B cell (primary cell): ENCODE measurements at regions of chr12 and their contacts with region 1.

Region 1: DNA sequence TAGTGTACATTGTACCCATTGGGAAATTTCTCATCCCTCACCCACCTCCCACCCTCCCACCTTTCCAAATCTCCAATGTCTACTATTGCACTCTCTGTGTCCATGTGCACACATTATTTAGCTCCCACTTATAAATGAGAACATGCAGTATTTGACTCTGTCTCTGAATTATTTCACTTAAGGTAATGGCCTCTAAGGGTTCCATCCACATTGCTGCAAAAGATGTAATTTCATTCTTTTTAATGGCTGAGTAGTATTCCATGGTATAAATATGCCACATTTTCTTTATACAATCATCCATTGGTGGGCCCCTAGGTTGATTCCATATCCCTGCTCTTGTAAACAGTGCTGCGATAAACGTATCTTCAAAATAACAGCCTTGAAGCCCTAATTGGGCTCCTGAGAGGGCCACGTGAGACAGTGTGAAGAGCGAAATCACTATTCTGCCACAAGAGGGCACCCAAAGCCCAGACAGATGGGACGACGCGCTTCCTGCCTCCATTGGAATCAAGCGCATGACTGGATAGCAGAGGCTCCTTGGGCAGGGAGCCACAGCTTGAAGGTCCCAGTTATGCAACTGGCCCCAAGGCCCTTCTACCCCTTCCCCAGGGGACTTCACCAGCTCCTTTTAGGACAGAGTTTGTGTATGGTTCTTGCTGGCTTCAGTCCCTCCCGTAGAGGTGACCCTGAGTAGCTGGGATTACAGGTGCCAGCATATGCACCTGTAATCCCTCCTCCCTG is 21.3 kb upstream of the CD27 start:
- DNase-seq: peak; percentile 91
- ATAC-seq: peak; percentile 34
- H3K4me3 ChIP-seq: peak overlapping the region in 1 of 5 experiments; percentile 18
- H3K4me3 Mint-ChIP-seq: peak overlapping the region; percentile 54
- H3K27ac ChIP-seq: peak overlapping the region; percentile 3 to 35
- H3K27ac Mint-ChIP-seq: peak overlapping the region; percentile 90
- H3K4me1 ChIP-seq: peaks cover 33 to 41% of the 10 kb centered on the region in 2 donors
- H3K4me1 Mint-ChIP-seq: peaks cover 39% of the 10 kb centered on the region
- H3K27me3 ChIP-seq: no peaks in the 10 kb centered on the region
- H3K27me3 Mint-ChIP-seq: peaks cover 13% of the 10 kb centered on the region
- CTCF ChIP-seq: peak; percentile 87

Region 2: GRCh38 chr12:6241495-6241894 is 181.9 kb before region 1 on chr12:
- CTCF ChIA-PET with region 1: no interaction called
- POLR2A ChIA-PET with region 1: no interaction called
- intact Hi-C with region 1: no loop called
- DNase-seq: no peak
- ATAC-seq: no peak
- H3K4me3 ChIP-seq: no peak overlapping the region
- H3K4me3 Mint-ChIP-seq: no peak overlapping the region
- H3K27ac ChIP-seq: no peak overlapping the region
- H3K27ac Mint-ChIP-seq: no peak overlapping the region
- H3K4me1 ChIP-seq: no peaks in the 10 kb centered on the region
- H3K4me1 Mint-ChIP-seq: no peaks in the 10 kb centered on the region
- H3K27me3 ChIP-seq: peaks cover 0 to 2% (median 0%) of the 10 kb centered on the region in 4 experiments
- H3K27me3 Mint-ChIP-seq: peaks cover 3% of the 10 kb centered on the region
- CTCF ChIP-seq: no peak

Region 3: DNA sequence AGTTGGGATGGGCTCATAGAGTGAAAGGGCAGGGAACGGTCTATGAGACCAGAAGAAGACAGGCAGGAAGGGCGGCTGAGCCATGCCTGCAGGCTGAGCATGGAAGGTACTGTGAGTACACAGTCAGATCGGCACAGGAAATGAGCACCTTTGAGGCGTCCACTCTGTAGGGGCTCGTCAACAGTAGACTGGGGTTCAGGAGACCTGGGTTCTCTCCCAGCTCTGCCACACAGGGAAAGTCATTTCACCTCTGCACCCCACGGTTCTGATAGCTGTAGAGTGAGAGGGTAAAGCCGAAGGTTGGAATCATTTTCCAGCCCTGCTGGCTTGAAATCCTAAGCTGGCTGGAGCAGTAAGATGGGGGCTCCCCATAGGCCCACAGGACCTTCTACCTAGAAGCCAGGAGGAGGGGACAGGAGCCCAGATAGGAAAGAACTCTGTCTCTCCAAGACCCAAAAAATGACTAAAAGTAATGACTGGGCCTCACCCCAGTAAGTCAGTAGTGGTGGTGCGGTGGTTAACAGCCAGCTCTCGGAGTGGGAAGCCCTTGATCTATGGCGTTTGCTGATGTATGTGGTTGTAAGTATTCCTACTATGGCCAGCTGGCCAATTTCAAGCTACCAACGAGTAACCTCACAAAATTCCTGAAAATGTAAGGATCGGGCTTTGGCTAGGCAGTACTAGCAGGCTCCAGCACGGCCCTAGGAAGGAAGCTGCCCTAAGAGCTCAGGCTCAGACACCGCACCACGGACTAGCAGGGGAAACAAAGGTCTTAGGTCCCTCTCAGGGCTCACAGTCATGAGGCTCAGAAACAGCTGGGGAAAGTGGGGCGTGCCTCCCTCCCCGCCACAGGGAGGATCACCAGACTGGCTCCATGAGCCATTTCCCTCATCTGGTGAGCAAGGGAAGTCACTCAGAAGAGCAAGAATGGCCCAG is 11.0 kb after region 1 on chr12:
- CTCF ChIA-PET with region 1: interaction called, 14 read pairs
- POLR2A ChIA-PET with region 1: interaction called, 3 read pairs
- intact Hi-C with region 1: no loop called
- DNase-seq: no peak
- ATAC-seq: peak; percentile 19
- H3K4me3 ChIP-seq: peak overlapping the region in 1 of 5 experiments; percentile 25
- H3K4me3 Mint-ChIP-seq: no peak overlapping the region
- H3K27ac ChIP-seq: no peak overlapping the region
- H3K27ac Mint-ChIP-seq: peak overlapping the region; percentile 65
- H3K4me1 ChIP-seq: peaks cover 25 to 42% of the 10 kb centered on the region in 2 donors
- H3K4me1 Mint-ChIP-seq: peaks cover 37% of the 10 kb centered on the region
- H3K27me3 ChIP-seq: no peaks in the 10 kb centered on the region
- H3K27me3 Mint-ChIP-seq: no peaks in the 10 kb centered on the region
- CTCF ChIP-seq: no peak

Region 4: GRCh38 chr12:6451348-6452244 is 28.2 kb after region 1 on chr12 and contains the start of gene TAPBPL:
- CTCF ChIA-PET with region 1: interaction called, 87 read pairs
- POLR2A ChIA-PET with region 1: interaction called, 66 read pairs
- intact Hi-C with region 1: loop called (anchors 1 kb)
- DNase-seq: peak; percentile 91
- ATAC-seq: peak; percentile 81
- H3K4me3 ChIP-seq: peak within 1 kb of the TSS; percentile 86 to 97 (median 94)
- H3K4me3 Mint-ChIP-seq: peak within 1 kb of the TSS; percentile 97
- H3K27ac ChIP-seq: peak within 1 kb of the TSS; percentile 96 to 98
- H3K27ac Mint-ChIP-seq: peak within 1 kb of the TSS; percentile 99
- H3K4me1 ChIP-seq: peaks cover 33 to 55% of the 10 kb centered on the region in 2 donors
- H3K4me1 Mint-ChIP-seq: peaks cover 64% of the 10 kb centered on the region
- H3K27me3 ChIP-seq: no peaks in the 10 kb centered on the region
- H3K27me3 Mint-ChIP-seq: no peaks in the 10 kb centered on the region
- CTCF ChIP-seq: no peak
- total RNA-seq, gene TAPBPL: 71.2 and 80.5 TPM in 2 replicates

Region 5: DNA sequence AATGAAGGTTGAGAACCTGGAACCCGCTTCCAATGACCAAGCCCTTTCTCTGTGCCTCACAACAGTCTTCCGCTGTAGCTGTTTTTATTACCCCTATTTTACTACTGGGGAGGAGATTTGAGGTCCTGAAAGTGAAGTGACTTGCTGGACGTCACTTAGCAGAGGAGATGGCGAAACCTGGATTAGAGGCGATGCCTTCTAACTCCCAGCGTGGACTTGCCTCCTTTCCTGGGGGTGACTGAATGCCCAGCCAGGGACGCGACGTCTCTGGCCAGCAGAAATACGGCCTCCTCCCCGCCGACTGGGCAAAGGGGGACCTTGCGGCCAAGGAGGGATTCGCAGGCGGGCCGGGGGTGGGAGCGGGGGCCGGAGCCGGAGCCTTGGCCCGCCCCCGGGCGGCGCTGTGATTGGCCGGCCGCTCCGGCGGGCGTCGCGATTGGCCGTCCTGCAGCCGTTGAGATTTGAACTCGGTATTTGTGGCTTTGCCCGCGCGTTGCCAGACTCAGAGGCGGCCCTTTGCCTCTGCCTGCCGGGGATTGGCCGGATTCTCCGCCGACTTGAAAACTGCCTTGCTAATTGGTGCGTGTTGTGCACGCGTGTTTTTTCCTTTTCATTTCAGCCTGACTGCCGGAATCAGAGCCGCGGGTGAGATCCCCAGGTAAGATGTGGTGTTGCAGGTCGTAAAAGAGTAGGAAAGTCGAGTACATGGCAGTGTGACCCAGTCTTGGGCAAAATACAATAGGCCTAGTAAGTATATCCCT is 70.2 kb after region 1 on chr12 and contains the start of gene NCAPD2:
- CTCF ChIA-PET with region 1: interaction called, 13 read pairs
- POLR2A ChIA-PET with region 1: interaction called, 14 read pairs
- intact Hi-C with region 1: loop called (anchors 1 kb)
- DNase-seq: peak; percentile 97
- ATAC-seq: peak; percentile 86
- H3K4me3 ChIP-seq: peak within 1 kb of the TSS; percentile 68 to 100 (median 95)
- H3K4me3 Mint-ChIP-seq: peak within 1 kb of the TSS; percentile 98
- H3K27ac ChIP-seq: peak within 1 kb of the TSS; percentile 92 to 95
- H3K27ac Mint-ChIP-seq: peak within 1 kb of the TSS; percentile 95
- H3K4me1 ChIP-seq: peaks cover 22 to 27% of the 10 kb centered on the region in 2 donors
- H3K4me1 Mint-ChIP-seq: peaks cover 31% of the 10 kb centered on the region
- H3K27me3 ChIP-seq: no peaks in the 10 kb centered on the region
- H3K27me3 Mint-ChIP-seq: no peaks in the 10 kb centered on the region
- CTCF ChIP-seq: peak; percentile 22
- total RNA-seq, gene NCAPD2: 41.1 and 42.1 TPM in 2 replicates

Region 6: DNA sequence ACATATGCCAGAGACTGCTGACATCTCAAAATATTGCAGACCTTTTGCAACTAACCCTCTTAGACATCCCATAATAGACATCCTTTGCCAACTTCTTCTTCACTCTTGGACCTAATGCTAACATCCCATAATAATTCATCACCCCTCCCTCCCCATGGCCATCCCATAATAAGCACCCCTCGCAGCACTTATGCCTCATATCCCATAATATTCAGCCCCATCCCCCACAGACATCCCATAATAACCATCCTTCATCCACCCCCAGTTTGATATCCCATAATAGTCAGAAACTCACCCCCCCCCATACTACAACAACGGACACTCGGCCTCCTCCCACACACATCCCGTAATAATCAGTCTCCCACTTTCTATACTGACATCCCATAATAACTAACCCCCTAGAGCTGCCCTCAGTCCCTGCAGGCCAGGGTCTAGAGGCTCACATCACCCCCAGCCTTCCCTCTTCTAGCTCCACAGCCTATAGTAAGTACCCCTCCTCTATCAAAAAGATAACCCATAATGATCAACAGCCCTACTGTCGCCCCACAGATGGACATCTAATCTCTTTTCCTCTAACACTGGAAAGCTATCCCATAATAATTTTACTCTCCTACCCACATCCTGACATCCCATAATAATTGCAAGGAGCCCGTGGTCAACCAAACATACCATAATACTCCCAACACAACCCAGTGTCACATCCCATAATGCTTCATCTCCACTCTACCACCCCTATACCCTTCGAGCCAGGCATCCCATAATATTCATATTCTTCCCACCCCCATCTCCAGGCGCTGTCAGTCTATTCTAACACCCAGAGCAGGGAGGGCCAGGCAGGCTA is 184.5 kb after region 1 on chr12:
- CTCF ChIA-PET with region 1: no interaction called
- POLR2A ChIA-PET with region 1: interaction called, 6 read pairs
- intact Hi-C with region 1: loop called (anchors 1 kb)
- DNase-seq: peak; percentile 90
- ATAC-seq: peak; percentile 20
- H3K4me3 ChIP-seq: no peak overlapping the region
- H3K4me3 Mint-ChIP-seq: no peak overlapping the region
- H3K27ac ChIP-seq: peak overlapping the region; percentile 90 to 95
- H3K27ac Mint-ChIP-seq: no peak overlapping the region
- H3K4me1 ChIP-seq: peaks cover 56 to 63% of the 10 kb centered on the region in 2 donors
- H3K4me1 Mint-ChIP-seq: peaks cover 58% of the 10 kb centered on the region
- H3K27me3 ChIP-seq: no peaks in the 10 kb centered on the region
- H3K27me3 Mint-ChIP-seq: no peaks in the 10 kb centered on the region
- CTCF ChIP-seq: no peak